ENCODE measurements at regions of chr9 and their contacts with region 1.

Region 1: DNA sequence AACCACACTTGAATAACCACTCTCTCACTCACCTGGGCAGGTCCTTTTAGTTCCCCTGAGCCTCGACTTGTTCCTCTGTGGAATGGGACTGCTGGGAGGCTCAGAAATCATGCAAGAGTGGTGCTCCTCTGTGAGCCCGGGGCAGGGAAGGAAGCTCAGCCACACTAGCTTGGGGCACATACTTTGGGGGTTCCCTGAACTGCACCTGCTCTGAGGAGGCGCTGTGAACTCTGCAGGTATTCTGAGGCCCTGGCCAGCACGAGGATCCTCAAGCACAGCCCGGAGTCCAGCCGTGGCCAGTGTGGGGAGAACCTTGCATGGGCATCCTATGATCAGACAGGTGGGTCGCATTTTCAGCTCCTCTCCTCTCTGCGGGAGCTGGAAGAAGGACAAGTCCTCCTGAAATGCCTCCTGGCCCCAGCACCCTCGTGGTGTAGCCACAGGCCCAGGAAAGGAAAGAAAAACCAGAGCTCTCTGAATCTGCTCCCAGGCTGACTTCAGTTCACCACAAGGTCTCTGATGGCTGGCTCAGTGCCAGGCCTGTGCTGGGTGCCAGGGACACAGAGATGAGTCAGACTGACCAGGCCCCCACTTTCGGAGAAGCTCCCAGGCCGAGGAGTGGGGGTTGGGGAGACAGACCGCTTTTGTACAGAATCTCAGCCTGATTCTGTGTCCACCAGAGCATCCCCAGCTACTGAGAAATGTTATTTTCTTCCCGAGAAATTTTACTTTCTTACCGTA is 11.9 kb downstream of the GLIPR2 start:
- DNase-seq: peak; percentile 92
- ATAC-seq: peak; percentile 32
- H3K4me3 Mint-ChIP-seq: no peak overlapping the region
- H3K27ac Mint-ChIP-seq: peak overlapping the region; percentile 4
- H3K4me1 Mint-ChIP-seq: peaks cover 88% of the 10 kb centered on the region
- H3K27me3 Mint-ChIP-seq: no peaks in the 10 kb centered on the region
- CTCF ChIP-seq: no peak

Region 2: GRCh38 chr9:36136272-36136893 is 12.1 kb before region 1 on chr9 and contains the start of gene GLIPR2:
- CTCF ChIA-PET with region 1: interaction called, 6 read pairs
- POLR2A ChIA-PET with region 1: interaction called, 25 read pairs
- intact Hi-C with region 1: no loop called
- DNase-seq: peak; percentile 82
- ATAC-seq: peak; percentile 96
- H3K4me3 Mint-ChIP-seq: peak within 1 kb of the TSS; percentile 85
- H3K27ac Mint-ChIP-seq: peak within 1 kb of the TSS; percentile 68
- H3K4me1 Mint-ChIP-seq: peaks cover 43% of the 10 kb centered on the region
- H3K27me3 Mint-ChIP-seq: no peaks in the 10 kb centered on the region
- CTCF ChIP-seq: peak; percentile 33
- total RNA-seq, gene GLIPR2: 12.2 to 13.6 TPM

Measured in activated CD8-positive, alpha-beta T cell treated with anti-CD3 and anti-CD28 coated beads for 36 hours (primary cell).